ENCODE measurements at regions of chr7 and their contacts with region 1.

Region 1: DNA sequence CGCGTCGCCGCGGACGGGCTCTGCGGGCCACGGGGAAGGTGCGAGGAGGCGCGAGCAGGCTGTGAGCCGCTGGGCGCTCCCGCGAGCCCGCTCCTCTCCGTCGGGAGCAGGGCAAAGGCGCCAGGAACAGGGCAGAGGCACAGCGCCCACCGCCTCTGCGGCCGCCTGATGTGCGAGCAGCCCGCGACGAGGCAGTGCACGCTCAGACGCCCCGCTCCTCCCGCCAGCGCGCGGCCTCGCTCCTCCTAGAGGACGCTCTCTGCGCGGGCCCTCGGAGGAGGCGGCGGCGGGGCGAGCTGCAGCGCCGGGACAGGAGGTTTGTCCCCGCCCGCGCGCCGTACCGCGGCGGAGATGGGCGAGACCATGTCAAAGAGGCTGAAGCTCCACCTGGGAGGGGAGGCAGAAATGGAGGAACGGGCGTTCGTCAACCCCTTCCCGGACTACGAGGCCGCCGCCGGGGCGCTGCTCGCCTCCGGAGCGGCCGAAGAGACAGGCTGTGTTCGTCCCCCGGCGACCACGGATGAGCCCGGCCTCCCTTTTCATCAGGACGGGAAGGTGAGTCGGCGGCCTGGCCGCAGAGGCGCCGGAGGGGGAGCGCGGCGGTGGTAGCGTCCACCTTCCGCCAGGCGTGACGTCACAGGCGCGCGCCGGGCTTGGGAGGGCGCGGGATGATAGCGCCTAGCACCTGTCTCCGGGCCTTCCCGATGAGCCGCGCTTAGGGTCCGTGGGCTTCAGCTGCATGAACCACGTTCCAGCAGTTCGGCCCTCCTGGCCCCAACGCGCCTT is 731 bp downstream of the LANCL2 start:
- DNase-seq: peak; percentile 96

Region 2: GRCh38 chr7:54758702-54759592 is 606.9 kb before region 1 on chr7 and contains the start of gene SEC61G:
- intact Hi-C with region 1: loop called (anchors 5 kb)
- DNase-seq: peak; percentile 98
- total RNA-seq, gene SEC61G: 102 TPM

Region 3: GRCh38 chr7:55223023-55223422 is 142.8 kb before region 1 on chr7:
- intact Hi-C with region 1: no loop called
- DNase-seq: no peak

Region 4: DNA sequence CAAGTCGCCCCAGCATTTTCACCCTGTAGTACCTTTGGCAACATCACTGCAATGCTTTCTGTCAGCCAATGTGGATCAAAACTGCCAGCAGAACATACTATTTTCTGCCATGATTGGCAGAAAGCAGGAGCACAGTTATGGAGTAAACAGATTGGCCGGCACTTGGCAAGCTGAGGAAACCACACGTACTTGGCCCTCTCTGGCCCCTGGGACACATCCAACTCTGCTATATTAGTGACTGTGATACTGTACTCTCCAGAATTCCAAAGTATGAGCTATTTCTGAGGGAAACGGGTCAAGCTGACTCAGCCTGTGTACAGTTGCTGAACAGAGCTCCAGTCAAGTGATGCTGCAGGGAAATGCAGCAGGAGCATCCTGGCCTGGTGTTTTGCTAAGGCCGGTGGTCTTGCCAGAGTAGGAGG is 40.5 kb before region 1 on chr7:
- intact Hi-C with region 1: loop called (anchors 2 kb)
- DNase-seq: peak; percentile 79

Region 5: DNA sequence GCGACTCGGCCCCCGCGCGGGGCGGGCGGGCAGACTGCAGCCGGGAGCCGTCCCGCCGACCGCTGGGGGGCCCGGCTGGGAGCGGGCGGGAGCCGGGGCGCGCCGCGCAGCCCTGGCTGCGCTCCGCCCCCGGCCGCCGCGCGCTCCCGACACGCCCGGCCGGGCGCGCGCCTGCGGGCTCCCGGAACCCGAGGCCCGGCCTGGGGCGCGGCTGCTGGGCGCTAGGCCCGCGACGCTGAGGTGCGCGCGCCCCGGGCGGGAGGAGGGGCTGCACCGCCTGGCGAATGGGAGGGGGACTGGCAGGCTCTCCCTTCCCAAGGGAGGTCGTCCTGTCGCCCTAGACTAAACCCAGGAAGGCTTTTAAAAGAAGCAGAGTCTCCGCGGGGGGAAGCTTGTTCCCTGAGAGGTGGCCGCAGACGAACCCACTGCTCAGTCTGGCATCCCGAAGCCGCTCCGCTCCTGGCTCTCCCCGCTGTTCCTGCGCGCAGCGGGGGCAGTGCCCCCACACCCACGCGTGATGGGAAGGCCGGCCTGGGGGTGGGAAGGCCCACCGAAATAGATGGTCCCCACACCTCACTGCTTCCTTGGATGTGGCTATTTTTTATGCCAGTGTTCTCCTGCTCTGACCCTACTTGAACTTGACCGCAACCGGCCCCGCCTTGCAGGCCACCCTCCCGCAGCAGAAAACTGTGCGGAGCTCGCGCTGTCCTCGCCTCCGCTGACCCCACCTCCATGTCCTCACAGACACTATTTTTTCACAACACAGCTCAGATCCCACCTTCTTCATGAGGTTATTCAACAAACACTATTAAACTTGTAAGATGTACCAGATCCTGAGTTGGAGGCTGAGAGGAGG is 206.7 kb after region 1 on chr7 and contains the start of gene VOPP1:
- intact Hi-C with region 1: loop called (anchors 2 kb)
- DNase-seq: peak; percentile 84
- total RNA-seq, gene VOPP1: 32.0 TPM

Measured in cardiac septum (tissue), 1 donor.